Caco-2 (cell line): ENCODE measurements at regions of chr2 and their contacts with region 1.

Region 1: DNA sequence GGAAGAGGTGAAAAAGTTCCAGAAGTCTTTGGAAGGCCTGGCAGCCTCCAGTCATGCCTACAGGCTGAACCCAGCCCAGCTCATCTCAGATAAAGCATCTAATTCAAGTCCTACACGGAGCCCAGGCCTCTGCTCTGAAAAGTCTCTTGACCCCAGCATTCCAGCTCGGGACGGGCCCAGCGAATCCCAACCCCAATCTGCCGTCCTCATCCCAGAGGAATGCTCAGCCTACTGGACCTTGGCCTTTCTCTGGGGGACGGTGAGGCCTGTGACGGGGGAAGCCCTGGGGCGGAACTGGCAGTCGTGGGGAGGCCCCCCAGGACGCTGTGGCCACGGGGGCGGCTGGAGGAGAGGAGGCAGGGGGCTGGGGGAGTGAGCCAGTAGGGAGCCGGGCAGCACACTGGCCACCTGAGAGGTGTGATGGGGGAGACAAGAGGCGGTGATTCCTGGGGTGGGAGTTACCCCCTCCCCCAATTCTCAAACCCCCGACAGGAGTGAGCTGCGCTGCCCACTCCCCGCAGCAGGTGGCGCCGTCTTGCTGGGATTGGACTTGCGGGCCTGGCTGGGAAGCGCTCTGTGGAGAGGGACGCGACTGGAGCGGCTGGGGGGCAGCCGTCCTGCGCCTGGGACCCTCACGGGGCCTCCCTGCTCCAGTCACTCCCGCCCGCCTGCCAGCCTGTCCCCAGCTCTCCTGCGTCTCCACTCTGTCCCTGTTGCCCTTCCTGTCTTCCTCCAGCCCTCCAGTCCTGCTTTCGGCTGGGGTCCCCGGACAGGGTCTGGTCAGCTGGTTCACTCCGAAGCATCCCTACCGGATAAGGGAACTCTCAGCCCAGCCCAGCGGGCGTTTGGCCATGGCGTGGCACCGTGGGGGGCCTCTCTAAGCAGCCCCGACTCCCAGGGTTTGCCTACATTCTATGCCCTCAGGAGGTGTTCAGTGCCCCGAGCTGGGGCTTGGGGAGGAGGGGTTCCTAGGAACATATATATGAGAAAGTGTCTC is 182.6 kb upstream of the HAAO start:
- DNase-seq: peak; percentile 95 to 98
- H3K4me3 ChIP-seq: peak overlapping the region; percentile 7; the same call in 1 of the 2 replicates
- H3K4me3 Mint-ChIP-seq: peak overlapping the region; percentile 63
- H3K27ac Mint-ChIP-seq: peak overlapping the region; percentile 84
- H3K4me1 ChIP-seq: peaks cover 83% of the 10 kb centered on the region
- H3K4me1 Mint-ChIP-seq: peaks cover 73% of the 10 kb centered on the region
- H3K27me3 ChIP-seq: no peaks in the 10 kb centered on the region
- H3K27me3 Mint-ChIP-seq: no peaks in the 10 kb centered on the region
- CTCF ChIP-seq: peak; percentile 96 to 97

Region 2: DNA sequence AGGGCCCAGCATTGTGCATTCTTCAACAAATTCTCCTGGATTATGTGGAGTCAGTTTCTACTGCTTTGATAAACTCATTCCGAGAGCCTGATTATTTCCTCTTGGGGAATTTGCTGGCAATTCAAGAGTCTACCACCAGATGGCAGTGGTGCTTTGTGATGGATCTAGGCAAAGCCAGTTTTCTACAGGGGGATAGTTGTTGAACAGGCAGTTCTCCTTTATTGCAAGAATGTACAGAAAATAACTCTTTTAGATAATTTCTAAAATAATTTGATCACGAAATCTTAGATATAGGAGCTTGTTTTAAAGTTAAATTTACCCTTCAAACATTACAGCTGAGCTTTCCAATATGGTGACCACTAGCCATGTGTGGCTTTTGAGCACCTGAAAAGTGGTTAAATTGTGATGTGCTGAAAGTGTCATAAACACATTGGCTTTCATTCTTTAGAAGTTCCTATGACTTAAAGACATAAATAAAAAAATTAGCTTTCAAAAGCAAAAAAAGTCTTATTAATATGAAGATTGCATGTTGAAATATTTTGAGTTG is 115.9 kb before region 1 on chr2:
- CTCF ChIA-PET with region 1: interaction called, 3 read pairs
- POLR2A ChIA-PET with region 1: no interaction called
- intact Hi-C with region 1: loop called (anchors 1 kb)
- DNase-seq: peak; percentile 75 to 85
- H3K4me3 ChIP-seq: no peak overlapping the region
- H3K4me3 Mint-ChIP-seq: no peak overlapping the region
- H3K27ac Mint-ChIP-seq: no peak overlapping the region
- H3K4me1 ChIP-seq: peaks cover 12% of the 10 kb centered on the region; the same call in 1 of the 2 replicates
- H3K4me1 Mint-ChIP-seq: peaks cover 14% of the 10 kb centered on the region
- H3K27me3 ChIP-seq: no peaks in the 10 kb centered on the region
- H3K27me3 Mint-ChIP-seq: no peaks in the 10 kb centered on the region
- CTCF ChIP-seq: peak; percentile 89 to 94

Region 3: DNA sequence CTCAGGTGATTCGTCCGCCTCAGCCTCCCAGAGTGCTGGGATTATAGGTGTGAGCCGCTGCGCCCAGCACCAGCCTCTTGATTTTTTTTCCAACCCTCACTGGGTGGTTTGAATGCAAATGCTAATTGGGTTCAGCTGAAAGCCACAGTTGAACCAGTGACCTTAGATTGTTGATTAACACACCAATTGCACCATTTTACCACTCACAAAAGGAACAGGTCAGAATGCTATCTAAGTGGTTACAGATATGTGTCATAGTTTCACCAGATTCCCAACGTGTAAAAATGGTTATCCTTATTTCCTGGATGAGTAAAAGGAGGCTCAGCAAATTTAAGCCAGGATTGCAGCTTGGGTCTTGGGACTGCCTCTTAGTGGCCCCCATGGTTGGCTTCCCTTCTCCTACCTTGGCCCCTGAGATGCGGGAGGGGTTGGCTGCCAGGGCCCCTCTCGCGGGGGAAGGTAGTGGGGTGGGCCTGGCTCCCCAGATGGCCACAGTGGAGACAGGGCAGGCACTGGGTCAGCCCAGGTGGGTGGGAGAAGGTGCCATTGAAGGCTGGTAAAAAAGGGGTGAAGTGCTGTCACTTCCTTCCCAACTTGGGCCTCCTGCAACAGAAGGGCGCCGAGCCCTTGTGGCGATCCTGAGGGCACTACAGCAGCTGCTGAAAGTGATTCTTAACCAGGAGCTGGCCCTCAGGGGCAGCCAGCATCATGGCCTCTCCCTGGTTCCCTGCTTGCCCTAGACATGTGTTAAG is 17.7 kb before region 1 on chr2:
- CTCF ChIA-PET with region 1: interaction called, 5 read pairs
- POLR2A ChIA-PET with region 1: interaction called, 3 read pairs
- intact Hi-C with region 1: loop called (anchors 1 kb)
- DNase-seq: peak; percentile 50 to 71
- H3K4me3 ChIP-seq: no peak overlapping the region
- H3K4me3 Mint-ChIP-seq: no peak overlapping the region
- H3K27ac Mint-ChIP-seq: no peak overlapping the region
- H3K4me1 ChIP-seq: peaks cover 51% of the 10 kb centered on the region
- H3K4me1 Mint-ChIP-seq: peaks cover 19% of the 10 kb centered on the region
- H3K27me3 ChIP-seq: no peaks in the 10 kb centered on the region
- H3K27me3 Mint-ChIP-seq: no peaks in the 10 kb centered on the region
- CTCF ChIP-seq: no peak

Region 4: DNA sequence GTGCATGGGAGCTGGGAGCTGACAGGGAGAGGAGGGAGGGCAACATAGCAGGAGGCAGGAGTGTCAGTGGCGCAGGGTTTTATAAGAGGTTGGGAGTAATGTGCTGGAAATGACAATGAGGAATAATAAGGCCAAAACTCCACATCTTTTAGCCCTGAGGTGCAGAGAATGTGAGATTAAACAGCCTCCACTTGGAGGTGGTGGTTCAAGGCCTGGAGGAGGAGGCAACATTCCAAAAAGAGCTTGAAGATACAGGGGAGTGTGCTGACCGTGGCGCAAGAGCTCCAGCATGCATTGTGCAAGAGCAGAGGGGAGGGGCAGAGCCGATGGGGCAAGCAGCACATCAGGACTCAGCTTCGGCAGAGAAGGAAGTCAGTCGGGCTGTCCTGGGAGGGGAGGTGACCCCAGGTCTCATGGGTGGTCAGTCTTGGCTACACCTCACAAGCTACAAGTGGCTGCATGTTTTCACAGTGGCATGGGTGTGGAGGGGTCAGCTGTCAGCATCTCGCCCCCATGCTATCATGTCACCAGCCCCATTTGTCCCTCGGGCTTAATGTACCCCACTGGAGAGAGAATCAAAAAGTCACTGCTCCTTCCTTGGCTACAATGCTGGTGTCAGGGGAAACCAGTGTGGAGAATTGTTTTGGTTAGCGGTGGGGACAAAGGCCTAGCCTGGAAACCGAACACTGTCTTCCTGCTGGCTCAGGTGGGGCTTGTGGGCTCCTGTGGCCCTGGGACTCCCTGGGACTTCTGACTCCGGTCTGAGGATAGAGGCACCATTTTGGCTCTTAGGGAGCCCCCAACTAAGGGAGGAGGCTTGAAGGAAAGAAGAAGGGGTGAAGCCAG is 43.4 kb after region 1 on chr2:
- CTCF ChIA-PET with region 1: interaction called, 10 read pairs
- POLR2A ChIA-PET with region 1: no interaction called
- intact Hi-C with region 1: loop called (anchors 1 kb)
- DNase-seq: peak; percentile 84 to 88
- H3K4me3 ChIP-seq: no peak overlapping the region
- H3K4me3 Mint-ChIP-seq: no peak overlapping the region
- H3K27ac Mint-ChIP-seq: peak overlapping the region; percentile 24
- H3K4me1 ChIP-seq: peaks cover 44% of the 10 kb centered on the region
- H3K4me1 Mint-ChIP-seq: peaks cover 35% of the 10 kb centered on the region
- H3K27me3 ChIP-seq: no peaks in the 10 kb centered on the region
- H3K27me3 Mint-ChIP-seq: no peaks in the 10 kb centered on the region
- CTCF ChIP-seq: no peak

Region 5: GRCh38 chr2:43086451-43087221 is 111.6 kb after region 1 on chr2:
- CTCF ChIA-PET with region 1: interaction called, 4 read pairs
- POLR2A ChIA-PET with region 1: no interaction called
- intact Hi-C with region 1: loop called (anchors 5 kb)
- DNase-seq: peak in 1 of 2 experiments; percentile 21
- H3K4me3 ChIP-seq: no peak overlapping the region
- H3K4me3 Mint-ChIP-seq: no peak overlapping the region
- H3K27ac Mint-ChIP-seq: peak overlapping the region; percentile 89
- H3K4me1 ChIP-seq: peaks cover 68% of the 10 kb centered on the region
- H3K4me1 Mint-ChIP-seq: peaks cover 54% of the 10 kb centered on the region
- H3K27me3 ChIP-seq: no peaks in the 10 kb centered on the region
- H3K27me3 Mint-ChIP-seq: no peaks in the 10 kb centered on the region
- CTCF ChIP-seq: no peak

Region 6: DNA sequence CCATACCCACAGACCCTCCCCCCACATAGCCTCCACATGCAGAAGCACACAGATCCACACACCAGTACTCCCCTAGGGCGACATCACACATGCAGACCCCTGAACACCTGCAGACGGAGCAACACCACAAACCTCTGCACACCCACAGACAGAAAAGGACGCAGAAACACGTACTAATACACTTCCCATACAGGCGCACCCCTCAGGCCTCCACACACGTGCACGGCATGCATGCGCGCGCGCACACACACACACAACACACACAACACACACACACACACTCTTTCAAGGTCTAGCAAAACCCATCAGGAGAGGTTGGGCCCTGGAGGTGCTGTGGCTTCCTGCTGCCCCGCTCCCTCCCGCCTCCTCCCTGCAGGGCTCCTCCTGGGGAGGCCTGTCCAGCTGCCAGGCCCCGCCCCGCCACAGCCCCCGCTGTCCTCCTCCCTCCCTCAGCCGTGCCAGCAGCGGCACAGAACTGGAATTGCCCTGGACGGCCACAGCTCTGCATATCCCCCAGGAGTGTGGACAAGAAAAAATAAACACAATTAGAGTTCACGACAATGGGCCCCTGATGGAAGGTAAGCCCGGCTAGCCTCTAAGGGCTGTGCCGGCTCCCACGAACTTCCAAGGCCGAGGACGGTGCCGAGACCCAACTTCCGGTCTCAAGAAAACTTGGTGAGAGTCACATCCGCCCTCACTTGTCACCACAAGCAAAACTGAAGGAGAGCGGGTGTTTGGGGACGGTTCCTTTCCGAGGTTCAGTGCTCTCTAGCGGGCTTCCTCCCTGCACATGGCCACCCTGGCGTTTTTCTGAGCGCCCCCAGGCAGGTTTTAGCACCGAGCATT is 244.6 kb after region 1 on chr2:
- CTCF ChIA-PET with region 1: interaction called, 13 read pairs
- POLR2A ChIA-PET with region 1: interaction called, 7 read pairs
- intact Hi-C with region 1: loop called (anchors 1 kb)
- DNase-seq: peak; percentile 91 to 92
- H3K4me3 ChIP-seq: peak overlapping the region; percentile 98
- H3K4me3 Mint-ChIP-seq: peak overlapping the region; percentile 70
- H3K27ac Mint-ChIP-seq: peak overlapping the region; percentile 76
- H3K4me1 ChIP-seq: peaks cover 40% of the 10 kb centered on the region
- H3K4me1 Mint-ChIP-seq: peaks cover 30% of the 10 kb centered on the region
- H3K27me3 ChIP-seq: no peaks in the 10 kb centered on the region
- H3K27me3 Mint-ChIP-seq: no peaks in the 10 kb centered on the region
- CTCF ChIP-seq: no peak

Region 7: GRCh38 chr2:43484323-43484930 is 509.4 kb after region 1 on chr2:
- CTCF ChIA-PET with region 1: interaction called, 5 read pairs
- POLR2A ChIA-PET with region 1: no interaction called
- intact Hi-C with region 1: loop called (anchors 1 kb)
- DNase-seq: peak in 1 of 2 experiments; percentile 57
- H3K4me3 ChIP-seq: no peak overlapping the region
- H3K4me3 Mint-ChIP-seq: no peak overlapping the region
- H3K27ac Mint-ChIP-seq: no peak overlapping the region
- H3K4me1 ChIP-seq: peaks cover 14% of the 10 kb centered on the region
- H3K4me1 Mint-ChIP-seq: peaks cover 34% of the 10 kb centered on the region
- H3K27me3 ChIP-seq: no peaks in the 10 kb centered on the region
- H3K27me3 Mint-ChIP-seq: no peaks in the 10 kb centered on the region
- CTCF ChIP-seq: peak; percentile 28 to 80